Stomach (tissue), 19 donors: ENCODE measurements at regions of chr2 and their contacts with region 1.

Region 1: DNA sequence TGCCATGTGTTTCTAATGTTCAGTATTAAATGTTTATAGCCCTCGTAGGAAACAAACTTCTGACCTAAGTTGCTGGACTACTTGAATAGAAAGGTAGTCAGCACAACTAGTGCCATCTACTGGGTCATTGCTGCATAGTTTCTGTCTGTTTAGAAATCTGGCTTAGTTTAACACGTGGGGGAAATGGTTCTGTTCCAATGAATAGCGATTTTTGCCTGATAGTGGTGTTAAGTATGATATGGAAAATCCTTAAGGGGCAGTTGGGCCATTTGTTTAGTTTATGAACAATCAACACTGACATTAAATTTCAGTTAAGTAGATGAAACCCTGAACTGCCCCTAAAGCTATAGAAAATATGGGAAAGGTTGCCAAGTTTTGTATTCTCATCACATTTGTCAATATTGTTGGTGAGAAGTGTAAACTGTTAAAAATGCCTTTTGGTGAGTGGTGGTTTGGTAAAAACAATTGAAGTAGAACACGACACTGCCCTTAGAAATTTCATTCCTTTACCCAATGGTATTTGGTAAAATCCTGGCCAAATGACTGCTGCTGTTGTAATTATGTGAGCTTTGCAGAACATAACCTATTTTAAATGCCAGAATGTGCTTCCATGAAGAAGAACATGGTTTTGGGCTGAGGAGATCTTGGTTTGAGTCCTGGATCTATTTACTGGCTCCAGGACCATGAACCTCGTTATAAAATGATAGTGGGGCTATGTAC is 13.2 kb downstream of the NABP1 start:
- DNase-seq: peak; percentile 32 to 89
- H3K4me3 ChIP-seq: no peak overlapping the region
- H3K27ac ChIP-seq: no peak overlapping the region
- H3K4me1 ChIP-seq: peaks cover 5 to 49% (median 11%) of the 10 kb centered on the region in 4 donors
- H3K27me3 ChIP-seq: peaks cover 0 to 3% (median 0%) of the 10 kb centered on the region in 3 donors
- CTCF ChIP-seq: peak in 5 of 7 experiments; percentile 52 to 85 (median 68)
- EP300 ChIP-seq: no peak
- POLR2A ChIP-seq: no peak

Region 2: GRCh38 chr2:191178806-191179514 is 512.2 kb before region 1 on chr2:
- intact Hi-C with region 1: no loop called
- DNase-seq: no peak
- H3K4me3 ChIP-seq: no peak overlapping the region
- H3K27ac ChIP-seq: no peak overlapping the region
- H3K4me1 ChIP-seq: no peaks in the 10 kb centered on the region
- H3K27me3 ChIP-seq: no peaks in the 10 kb centered on the region
- CTCF ChIP-seq: no peak
- EP300 ChIP-seq: no peak
- POLR2A ChIP-seq: no peak

Region 3: GRCh38 chr2:191552066-191552465 is 139.1 kb before region 1 on chr2:
- intact Hi-C with region 1: loop called (anchors 5 kb)
- DNase-seq: peak in 1 of 2 donors; percentile 47
- H3K4me3 ChIP-seq: peak overlapping the region in 1 of 4 donors; percentile 16
- H3K27ac ChIP-seq: no peak overlapping the region
- H3K4me1 ChIP-seq: peaks cover 0 to 20% (median 5%) of the 10 kb centered on the region in 4 donors
- H3K27me3 ChIP-seq: no peaks in the 10 kb centered on the region
- CTCF ChIP-seq: no peak
- EP300 ChIP-seq: no peak
- POLR2A ChIP-seq: no peak

Region 4: GRCh38 chr2:191566344-191566743 is 124.8 kb before region 1 on chr2:
- intact Hi-C with region 1: loop called (anchors 5 kb)
- DNase-seq: peak; percentile 77 to 79
- H3K4me3 ChIP-seq: no peak overlapping the region
- H3K27ac ChIP-seq: peak overlapping the region in 1 of 5 donors; percentile 39
- H3K4me1 ChIP-seq: peaks cover 0 to 19% (median 0%) of the 10 kb centered on the region in 4 donors
- H3K27me3 ChIP-seq: peaks cover 0 to 5% (median 0%) of the 10 kb centered on the region in 3 donors
- CTCF ChIP-seq: peak in 5 of 7 experiments; percentile 38 to 72 (median 59)
- EP300 ChIP-seq: no peak
- POLR2A ChIP-seq: no peak